Right lobe of liver (tissue), 6 donors: ENCODE measurements at regions of chr22 and their contacts with region 1.

Region 1: DNA sequence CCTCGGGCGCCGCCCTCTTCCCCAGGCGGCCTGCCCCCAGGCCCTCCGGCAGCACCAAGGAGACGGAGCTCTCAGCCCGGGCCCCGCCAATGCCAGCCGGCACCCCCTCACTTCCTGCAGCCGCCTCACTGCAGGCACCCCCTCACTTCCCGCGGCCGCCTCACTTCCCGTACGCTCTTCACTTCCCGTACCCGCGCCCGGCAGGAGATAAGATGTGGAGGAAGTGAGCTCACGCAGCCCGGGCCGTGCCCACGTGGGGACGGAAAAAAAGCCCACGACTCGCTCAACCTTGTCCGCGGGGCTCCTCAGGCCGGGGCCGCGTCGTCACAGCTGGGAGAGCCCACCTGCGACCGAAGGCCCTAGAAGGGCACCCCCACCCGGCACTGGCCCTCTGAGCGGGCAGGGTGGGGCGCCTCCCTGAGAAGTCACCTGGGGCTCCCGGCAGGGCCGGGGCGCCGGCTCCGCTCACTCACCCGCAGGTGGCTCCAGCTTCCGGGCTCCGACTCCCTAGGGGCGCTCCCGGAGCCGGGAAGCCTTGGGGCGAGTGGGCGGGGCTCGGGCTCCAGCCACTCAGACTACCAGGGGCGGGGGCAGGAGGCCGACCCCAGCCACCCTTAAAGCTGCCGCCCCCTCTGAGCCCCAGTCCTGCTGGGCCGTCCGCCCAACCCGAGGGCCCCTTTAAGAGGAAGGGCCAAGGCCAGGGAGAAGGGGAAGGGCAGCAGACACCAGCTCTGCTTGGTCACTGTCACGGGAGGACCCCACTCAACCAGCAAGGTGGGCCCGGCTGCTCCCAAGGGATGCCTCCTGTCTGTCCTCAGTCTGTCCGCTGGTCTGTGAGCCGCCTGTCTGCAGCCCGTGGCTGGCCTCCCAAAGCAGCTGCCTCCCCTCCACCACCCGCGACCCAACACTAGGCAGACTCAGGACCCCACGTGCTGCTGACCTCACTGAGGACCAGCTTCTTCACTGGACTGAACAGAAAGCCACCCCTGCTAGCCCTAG is 31.4 kb downstream of the PISD start:
- DNase-seq: peak; percentile 76 to 85 (median 84)
- ATAC-seq: peak; percentile 63 to 78 (median 65)
- H3K4me3 ChIP-seq: peak overlapping the region; percentile 60 to 82 (median 63)
- H3K27ac ChIP-seq: peak overlapping the region; percentile 68 to 94 (median 80)
- H3K4me1 ChIP-seq: peaks cover 0 to 35% (median 9%) of the 10 kb centered on the region in 4 donors
- H3K27me3 ChIP-seq: no peaks in the 10 kb centered on the region
- CTCF ChIP-seq: no peak
- POLR2A ChIP-seq: peak; percentile 30

Region 2: DNA sequence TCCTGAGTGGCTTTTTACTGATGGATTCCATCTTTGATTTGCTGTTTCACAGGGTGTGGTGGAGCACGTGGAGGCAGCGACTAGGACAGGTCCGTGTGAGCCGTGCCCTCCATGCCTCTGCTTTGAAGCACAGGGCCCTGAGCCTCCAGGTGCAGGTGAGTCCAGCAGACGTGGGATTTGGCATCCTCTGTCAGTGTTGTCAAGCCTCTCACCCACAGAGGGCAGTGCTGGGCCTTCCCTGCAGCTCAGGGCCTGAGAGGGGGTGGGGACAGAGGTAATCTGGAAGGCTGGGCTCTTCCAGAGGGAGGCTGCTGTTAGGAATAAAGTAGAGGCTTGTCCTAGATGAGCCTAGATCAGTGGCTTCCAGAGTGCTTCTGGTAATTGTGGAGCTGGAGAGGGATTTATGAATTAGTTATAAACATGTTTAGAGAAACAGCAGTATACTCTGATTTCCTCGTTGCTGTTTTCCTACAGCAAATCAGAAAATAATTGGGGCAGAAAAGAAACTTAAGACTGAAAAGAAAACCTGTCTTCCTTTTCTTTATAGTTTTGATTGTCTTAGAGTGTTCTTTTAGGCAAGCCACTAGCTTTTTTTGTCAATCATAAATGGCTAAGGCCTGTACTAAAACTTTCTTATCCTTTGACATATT is 69.3 kb before region 1 on chr22:
- intact Hi-C with region 1: loop called (anchors 5 to 10 kb)
- DNase-seq: peak; percentile 76 to 81 (median 81)
- ATAC-seq: peak; percentile 99 to 100 (median 100)
- H3K4me3 ChIP-seq: no peak overlapping the region
- H3K27ac ChIP-seq: no peak overlapping the region
- H3K4me1 ChIP-seq: no peaks in the 10 kb centered on the region
- H3K27me3 ChIP-seq: no peaks in the 10 kb centered on the region
- CTCF ChIP-seq: peak; percentile 63 to 83 (median 79)
- POLR2A ChIP-seq: no peak

Region 3: GRCh38 chr22:31857247-31857646 is 226.6 kb after region 1 on chr22:
- intact Hi-C with region 1: no loop called
- DNase-seq: no peak
- ATAC-seq: no peak
- H3K4me3 ChIP-seq: no peak overlapping the region
- H3K27ac ChIP-seq: no peak overlapping the region
- H3K4me1 ChIP-seq: no peaks in the 10 kb centered on the region
- H3K27me3 ChIP-seq: no peaks in the 10 kb centered on the region
- CTCF ChIP-seq: no peak
- POLR2A ChIP-seq: no peak

Region 4: GRCh38 chr22:32020117-32020516 is 389.5 kb after region 1 on chr22:
- intact Hi-C with region 1: no loop called
- DNase-seq: no peak
- ATAC-seq: peak in 1 of 4 donors; percentile 54
- H3K4me3 ChIP-seq: no peak overlapping the region
- H3K27ac ChIP-seq: no peak overlapping the region
- H3K4me1 ChIP-seq: no peaks in the 10 kb centered on the region
- H3K27me3 ChIP-seq: no peaks in the 10 kb centered on the region
- CTCF ChIP-seq: no peak
- POLR2A ChIP-seq: no peak